Activated B cell treated with CpG ODN at 0.5 μM for 24 hours (primary cell): ENCODE measurements at regions of chr19 and their contacts with region 1.

Region 1: DNA sequence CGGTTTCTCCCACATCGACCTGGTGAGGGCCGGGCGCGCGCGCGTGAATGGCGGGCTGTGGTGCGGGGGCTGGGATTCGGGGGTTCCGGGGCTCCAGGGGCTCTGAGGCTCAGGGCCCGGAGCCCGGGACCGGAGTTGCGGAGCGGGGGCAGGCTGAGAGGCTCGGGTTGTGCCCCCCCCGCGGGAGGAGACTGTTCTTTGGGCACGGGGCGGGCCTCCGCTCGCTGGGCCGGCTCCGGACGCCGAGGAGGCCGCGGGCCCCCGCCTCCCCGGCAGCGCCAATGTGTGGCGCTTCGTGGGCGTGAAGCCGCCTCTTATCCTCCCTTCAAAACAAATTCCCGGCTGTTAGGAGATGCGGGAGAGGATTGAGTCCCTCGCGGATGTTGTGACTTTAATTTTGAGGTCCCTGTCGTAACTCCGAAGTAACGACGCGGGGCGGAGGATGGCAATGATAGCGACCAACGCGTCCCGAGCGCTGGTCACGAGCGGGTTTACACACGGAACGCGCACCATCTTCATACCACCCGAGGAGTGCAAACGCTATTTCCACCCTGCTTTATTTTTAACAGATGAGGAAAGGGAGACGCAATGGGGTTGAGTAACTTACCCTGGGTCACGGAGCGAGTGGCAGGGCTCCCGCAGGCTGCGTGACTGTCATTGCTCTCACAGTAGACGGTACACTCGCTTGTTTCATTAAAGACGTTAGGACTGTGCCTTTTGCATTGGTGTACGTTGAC is 536 bp downstream of the UBA2 start:
- DNase-seq: no peak
- ATAC-seq: peak; percentile 49
- H3K4me3 Mint-ChIP-seq: peak overlapping the region; percentile 96
- H3K27ac Mint-ChIP-seq: peak overlapping the region; percentile 93
- H3K4me1 Mint-ChIP-seq: peaks cover 35% of the 10 kb centered on the region
- H3K27me3 Mint-ChIP-seq: no peaks in the 10 kb centered on the region
- CTCF ChIP-seq: no peak

Region 2: GRCh38 chr19:33373701-33374421 is 1054.9 kb before region 1 on chr19 and contains the start of gene CEBPG:
- CTCF ChIA-PET with region 1: no interaction called
- POLR2A ChIA-PET with region 1: no interaction called
- intact Hi-C with region 1: loop called (anchors 5 kb)
- DNase-seq: no peak
- ATAC-seq: peak; percentile 34
- H3K4me3 Mint-ChIP-seq: peak within 1 kb of the TSS; percentile 86
- H3K27ac Mint-ChIP-seq: peak within 1 kb of the TSS; percentile 93
- H3K4me1 Mint-ChIP-seq: peaks cover 52% of the 10 kb centered on the region
- H3K27me3 Mint-ChIP-seq: no peaks in the 10 kb centered on the region
- CTCF ChIP-seq: no peak
- total RNA-seq, gene CEBPG: 30.6 and 32.0 TPM in 2 replicates

Region 3: GRCh38 chr19:34134190-34135053 is 294.3 kb before region 1 on chr19:
- CTCF ChIA-PET with region 1: no interaction called
- POLR2A ChIA-PET with region 1: no interaction called
- intact Hi-C with region 1: loop called (anchors 1 kb)
- DNase-seq: peak; percentile 96
- ATAC-seq: peak; percentile 99
- H3K4me3 Mint-ChIP-seq: peak overlapping the region; percentile 93
- H3K27ac Mint-ChIP-seq: peak overlapping the region; percentile 91
- H3K4me1 Mint-ChIP-seq: peaks cover 5% of the 10 kb centered on the region
- H3K27me3 Mint-ChIP-seq: no peaks in the 10 kb centered on the region
- CTCF ChIP-seq: no peak

Region 4: DNA sequence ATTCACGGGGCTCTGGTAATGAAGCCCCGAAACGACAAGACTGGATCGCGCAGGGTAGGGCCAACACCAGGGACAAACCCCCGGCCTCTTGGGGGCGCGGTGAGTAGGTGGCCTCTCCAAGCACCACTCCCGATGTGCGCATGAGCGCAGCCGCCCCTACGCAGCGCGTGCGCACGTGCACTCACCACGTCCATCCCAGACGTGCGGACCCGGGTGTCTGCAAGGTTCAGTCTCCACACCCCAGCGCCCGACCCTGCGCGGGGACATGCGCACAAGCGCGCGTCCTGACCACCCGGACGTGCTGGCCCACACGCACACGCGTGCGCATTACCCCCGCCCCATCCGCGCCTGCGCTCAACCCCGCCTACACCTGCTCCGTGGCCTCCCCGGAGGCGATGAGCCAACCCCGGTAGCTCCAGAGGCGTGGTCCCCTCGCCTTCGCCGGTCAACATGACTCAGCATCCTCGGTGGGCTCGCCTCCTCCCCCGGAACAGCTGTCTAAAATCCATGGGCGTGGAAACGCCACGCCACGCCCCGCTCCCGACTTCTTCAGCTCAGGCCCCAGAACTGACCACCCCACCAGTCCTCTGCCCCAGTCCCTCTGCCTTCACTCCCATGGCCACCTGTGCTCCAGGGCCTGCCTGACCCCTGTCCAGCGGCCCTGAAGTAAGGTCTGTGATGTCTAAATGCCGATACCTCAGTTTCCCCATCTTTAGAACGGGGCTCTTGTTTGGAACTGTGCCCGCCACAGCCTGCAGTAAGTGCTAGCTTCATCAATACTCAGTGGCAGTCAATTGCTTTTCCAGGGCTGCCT is 69.4 kb before region 1 on chr19:
- CTCF ChIA-PET with region 1: interaction called, 6 read pairs
- POLR2A ChIA-PET with region 1: interaction called, 9 read pairs
- intact Hi-C with region 1: loop called (anchors 1 kb)
- DNase-seq: peak; percentile 97
- ATAC-seq: peak; percentile 93
- H3K4me3 Mint-ChIP-seq: peak overlapping the region; percentile 92
- H3K27ac Mint-ChIP-seq: peak overlapping the region; percentile 95
- H3K4me1 Mint-ChIP-seq: peaks cover 26% of the 10 kb centered on the region
- H3K27me3 Mint-ChIP-seq: no peaks in the 10 kb centered on the region
- CTCF ChIP-seq: no peak

Region 5: DNA sequence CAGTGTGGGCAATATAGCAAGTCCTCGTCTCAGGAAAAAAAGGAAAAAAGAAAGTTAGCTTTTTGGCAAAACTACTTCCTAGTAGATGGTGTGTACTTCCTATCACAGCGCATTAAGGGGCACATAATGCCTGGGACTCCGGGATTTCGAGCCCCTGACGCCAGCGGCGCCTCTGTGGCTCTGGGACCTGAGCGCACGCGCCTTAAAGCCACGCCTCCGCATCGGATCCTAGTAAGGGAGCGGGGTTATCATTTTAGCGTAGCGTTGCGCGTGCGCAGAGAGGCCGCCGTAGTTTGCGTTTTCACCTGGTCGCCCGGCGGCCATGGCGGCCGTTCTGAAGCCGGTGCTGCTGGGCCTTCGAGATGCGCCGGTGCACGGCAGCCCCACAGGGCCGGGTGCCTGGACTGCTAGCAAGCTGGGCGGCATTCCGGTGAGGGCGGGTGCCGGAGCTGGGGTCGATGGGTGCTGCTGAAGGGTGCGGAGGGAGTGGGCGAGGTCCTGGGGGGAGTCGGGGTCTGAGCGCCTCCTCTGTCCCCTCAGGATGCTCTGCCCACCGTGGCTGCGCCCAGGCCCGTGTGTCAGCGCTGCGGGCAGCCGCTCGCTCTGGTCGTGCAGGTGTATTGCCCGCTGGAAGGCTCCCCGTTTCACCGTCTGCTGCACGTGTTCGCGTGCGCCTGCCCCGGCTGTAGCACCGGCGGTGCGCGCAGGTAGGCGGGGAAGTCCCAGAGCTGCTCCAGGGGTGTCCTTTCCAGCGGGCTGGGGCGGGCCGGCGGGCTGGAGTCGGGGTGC is 24.4 kb before region 1 on chr19 and contains the start of gene PDCD2L:
- CTCF ChIA-PET with region 1: no interaction called
- POLR2A ChIA-PET with region 1: interaction called, 6 read pairs
- intact Hi-C with region 1: loop called (anchors 1 kb)
- DNase-seq: peak; percentile 86
- ATAC-seq: peak; percentile 98
- H3K4me3 Mint-ChIP-seq: peak within 1 kb of the TSS; percentile 91
- H3K27ac Mint-ChIP-seq: peak within 1 kb of the TSS; percentile 85
- H3K4me1 Mint-ChIP-seq: peaks cover 22% of the 10 kb centered on the region
- H3K27me3 Mint-ChIP-seq: no peaks in the 10 kb centered on the region
- CTCF ChIP-seq: no peak
- total RNA-seq, gene PDCD2L: 13.4 and 18.6 TPM in 2 replicates

Region 6: GRCh38 chr19:34461375-34462100 is 32.8 kb after region 1 on chr19:
- CTCF ChIA-PET with region 1: no interaction called
- POLR2A ChIA-PET with region 1: no interaction called
- intact Hi-C with region 1: no loop called
- DNase-seq: no peak
- ATAC-seq: no peak
- H3K4me3 Mint-ChIP-seq: no peak overlapping the region
- H3K27ac Mint-ChIP-seq: no peak overlapping the region
- H3K4me1 Mint-ChIP-seq: no peaks in the 10 kb centered on the region
- H3K27me3 Mint-ChIP-seq: no peaks in the 10 kb centered on the region
- CTCF ChIP-seq: no peak

Region 7: GRCh38 chr19:34501339-34502320 is 72.9 kb after region 1 on chr19:
- CTCF ChIA-PET with region 1: no interaction called
- POLR2A ChIA-PET with region 1: no interaction called
- intact Hi-C with region 1: loop called (anchors 2 kb)
- DNase-seq: peak; percentile 83
- ATAC-seq: peak; percentile 78
- H3K4me3 Mint-ChIP-seq: peak overlapping the region; percentile 63
- H3K27ac Mint-ChIP-seq: no peak overlapping the region
- H3K4me1 Mint-ChIP-seq: peaks cover 15% of the 10 kb centered on the region
- H3K27me3 Mint-ChIP-seq: peaks cover 6% of the 10 kb centered on the region
- CTCF ChIP-seq: peak; percentile 71

Region 8: GRCh38 chr19:34577531-34578107 is 148.9 kb after region 1 on chr19:
- CTCF ChIA-PET with region 1: no interaction called
- POLR2A ChIA-PET with region 1: no interaction called
- intact Hi-C with region 1: no loop called
- DNase-seq: no peak
- ATAC-seq: no peak
- H3K4me3 Mint-ChIP-seq: no peak overlapping the region
- H3K27ac Mint-ChIP-seq: no peak overlapping the region
- H3K4me1 Mint-ChIP-seq: no peaks in the 10 kb centered on the region
- H3K27me3 Mint-ChIP-seq: peaks cover 15% of the 10 kb centered on the region
- CTCF ChIP-seq: no peak

Region 9: DNA sequence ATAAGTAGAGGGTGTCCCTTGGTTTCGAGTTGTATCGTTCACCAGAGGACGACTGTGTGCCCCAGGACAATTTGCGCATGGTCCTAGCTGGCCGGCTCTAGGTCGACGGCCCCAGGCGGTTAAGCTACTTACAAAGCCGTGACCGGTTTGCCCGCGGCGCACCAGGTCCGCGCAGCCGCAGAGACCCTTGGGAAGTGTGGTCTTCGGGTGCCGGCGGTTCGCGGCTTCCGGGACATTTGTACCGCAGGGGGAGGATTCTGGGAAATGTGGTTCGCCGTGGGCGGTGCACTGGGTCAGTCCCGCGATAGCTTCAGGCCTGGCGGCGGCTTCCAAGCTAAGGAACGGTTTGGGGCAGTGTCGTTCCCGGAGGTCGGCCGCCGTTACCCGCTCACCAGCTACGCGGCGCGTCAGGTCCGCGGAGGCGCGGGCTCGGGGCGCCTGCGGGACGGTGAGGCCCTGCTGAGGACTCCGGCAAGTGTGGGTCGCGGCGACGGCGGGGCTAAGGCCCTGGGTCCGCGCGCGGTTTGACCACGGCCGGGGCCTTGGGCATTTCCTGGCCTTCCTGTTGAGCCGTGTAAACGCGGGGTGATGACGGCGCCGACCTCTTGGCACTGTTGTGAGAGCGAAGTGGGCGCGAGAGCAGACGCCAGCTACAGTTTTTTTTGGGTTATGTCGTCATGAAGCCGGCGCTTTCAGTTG is 248.8 kb after region 1 on chr19 and contains the start of gene ZNF302:
- CTCF ChIA-PET with region 1: no interaction called
- POLR2A ChIA-PET with region 1: interaction called, 6 read pairs
- intact Hi-C with region 1: loop called (anchors 1 kb)
- DNase-seq: peak; percentile 94
- ATAC-seq: peak; percentile 90
- H3K4me3 Mint-ChIP-seq: peak within 1 kb of the TSS; percentile 98
- H3K27ac Mint-ChIP-seq: peak within 1 kb of the TSS; percentile 99
- H3K4me1 Mint-ChIP-seq: peaks cover 33% of the 10 kb centered on the region
- H3K27me3 Mint-ChIP-seq: peaks cover 6% of the 10 kb centered on the region
- CTCF ChIP-seq: no peak
- total RNA-seq, gene ZNF302: 33.7 and 38.1 TPM in 2 replicates